ENCODE measurements at regions of chr6 and their contacts with region 1.

Region 1: DNA sequence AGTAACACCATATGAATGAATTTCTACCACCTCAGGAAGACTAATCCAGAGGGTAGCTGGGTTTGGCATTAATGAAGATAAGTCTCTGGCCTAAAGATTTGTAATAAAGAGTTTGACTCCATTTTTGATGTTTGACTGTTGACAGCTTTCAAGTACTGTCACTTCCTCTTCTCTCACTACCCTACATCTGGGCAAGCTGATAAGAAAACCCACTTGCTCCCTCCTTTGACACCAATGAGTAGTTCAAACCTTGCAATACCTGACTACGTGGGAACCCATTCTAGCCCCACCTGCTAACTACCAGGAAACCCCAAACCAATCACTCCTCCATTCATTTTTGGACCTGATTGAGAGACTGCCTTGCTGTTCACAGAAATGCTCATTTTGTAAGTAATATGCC is 621.5 kb downstream of the TENT5A start:
- DNase-seq: no peak
- H3K4me3 Mint-ChIP-seq: no peak overlapping the region
- H3K27ac Mint-ChIP-seq: no peak overlapping the region
- H3K4me1 Mint-ChIP-seq: no peaks in the 10 kb centered on the region
- H3K27me3 Mint-ChIP-seq: no peaks in the 10 kb centered on the region
- CTCF ChIP-seq: no peak

Region 2: DNA sequence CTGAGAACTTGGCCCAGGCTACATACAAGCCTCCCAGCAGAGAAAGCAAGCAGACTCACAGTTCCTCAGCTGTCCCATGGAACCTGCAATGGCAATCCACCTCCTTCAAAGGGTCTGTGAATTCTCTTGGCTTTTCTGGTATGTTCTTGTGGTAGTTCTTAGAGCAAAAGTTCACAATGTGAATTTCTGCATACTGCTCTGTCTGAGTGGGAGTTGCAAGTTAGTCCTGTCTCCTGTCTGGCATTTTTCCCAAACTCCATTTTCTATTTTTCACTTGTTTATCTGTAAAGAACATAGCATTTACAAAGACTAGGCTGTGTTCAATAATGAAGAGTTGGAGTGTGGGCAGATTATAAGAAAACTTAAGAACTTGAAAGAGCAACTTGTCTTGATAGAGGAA is 754.6 kb before region 1 on chr6:
- CTCF ChIA-PET with region 1: no interaction called
- POLR2A ChIA-PET with region 1: no interaction called
- intact Hi-C with region 1: loop called (anchors 5 kb)
- DNase-seq: no peak
- H3K4me3 Mint-ChIP-seq: no peak overlapping the region
- H3K27ac Mint-ChIP-seq: no peak overlapping the region
- H3K4me1 Mint-ChIP-seq: no peaks in the 10 kb centered on the region
- H3K27me3 Mint-ChIP-seq: no peaks in the 10 kb centered on the region
- CTCF ChIP-seq: no peak

Region 3: DNA sequence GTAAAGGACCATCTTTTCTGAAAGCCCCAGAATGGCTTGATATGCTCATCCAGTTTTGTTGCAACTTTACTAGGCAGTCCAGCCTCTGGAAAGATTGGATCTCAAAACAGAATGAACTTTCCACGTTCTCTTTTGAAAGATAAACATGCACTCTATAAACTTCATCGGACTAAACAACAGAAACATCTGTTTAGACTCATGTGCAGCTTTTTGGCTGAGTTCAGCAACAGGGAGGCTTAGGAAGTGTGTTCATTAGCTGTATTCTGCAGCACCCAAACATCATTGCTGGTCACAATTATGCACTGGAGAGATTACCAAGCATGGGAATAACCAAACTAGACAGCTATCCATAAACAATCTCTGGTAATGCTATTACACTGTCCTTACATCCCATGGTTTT is 441.1 kb after region 1 on chr6:
- CTCF ChIA-PET with region 1: no interaction called
- POLR2A ChIA-PET with region 1: no interaction called
- intact Hi-C with region 1: no loop called
- DNase-seq: no peak
- H3K4me3 Mint-ChIP-seq: no peak overlapping the region
- H3K27ac Mint-ChIP-seq: no peak overlapping the region
- H3K4me1 Mint-ChIP-seq: no peaks in the 10 kb centered on the region
- H3K27me3 Mint-ChIP-seq: no peaks in the 10 kb centered on the region
- CTCF ChIP-seq: no peak

Measured in MCF 10A (cell line).